Transverse colon (tissue), 4 donors: ENCODE measurements at regions of chr22 and their contacts with region 1.

Region 1: DNA sequence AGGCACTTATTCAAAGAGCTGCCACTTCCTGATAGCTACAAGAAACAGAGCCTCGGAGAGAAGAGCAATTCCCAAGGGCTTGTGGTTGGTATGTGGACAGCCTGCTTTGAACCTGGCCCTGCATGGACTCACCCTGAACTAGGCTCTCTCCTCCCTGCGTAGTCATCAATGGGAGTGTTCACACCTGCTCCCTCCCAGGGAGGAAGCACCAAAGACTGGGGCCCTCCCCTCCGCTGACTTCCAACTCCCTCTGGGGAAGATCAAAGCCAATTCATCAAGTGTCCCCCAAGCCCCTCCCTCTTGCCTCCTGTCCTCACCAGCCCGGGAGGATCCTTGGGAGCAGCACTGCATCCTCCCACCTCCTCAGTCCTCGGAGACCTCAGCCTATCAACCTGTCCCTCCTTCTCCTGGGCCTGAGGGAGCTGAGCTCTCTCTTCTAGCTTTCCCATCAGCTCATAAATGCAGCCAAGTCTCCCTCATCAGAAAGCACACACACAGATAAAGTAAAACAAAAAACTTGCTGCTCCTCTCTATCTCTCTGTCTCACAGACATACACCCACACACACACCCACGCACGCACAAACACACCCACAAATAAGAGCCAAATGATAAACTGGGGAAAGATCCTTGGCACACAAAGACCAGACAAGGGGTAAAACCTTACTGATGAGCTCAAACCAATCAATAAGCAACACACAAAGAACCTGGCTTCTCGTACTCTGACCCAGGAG is 3.3 kb downstream of the A4GALT start:
- DNase-seq: no peak
- H3K4me3 ChIP-seq: no peak overlapping the region
- H3K27ac ChIP-seq: peak overlapping the region; percentile 23 to 89 (median 48)
- H3K4me1 ChIP-seq: peaks cover 0 to 28% (median 19%) of the 10 kb centered on the region in 4 donors
- H3K27me3 ChIP-seq: peaks cover 46% of the 10 kb centered on the region
- CTCF ChIP-seq: no peak
- EP300 ChIP-seq: no peak
- POLR2A ChIP-seq: no peak

Region 2: DNA sequence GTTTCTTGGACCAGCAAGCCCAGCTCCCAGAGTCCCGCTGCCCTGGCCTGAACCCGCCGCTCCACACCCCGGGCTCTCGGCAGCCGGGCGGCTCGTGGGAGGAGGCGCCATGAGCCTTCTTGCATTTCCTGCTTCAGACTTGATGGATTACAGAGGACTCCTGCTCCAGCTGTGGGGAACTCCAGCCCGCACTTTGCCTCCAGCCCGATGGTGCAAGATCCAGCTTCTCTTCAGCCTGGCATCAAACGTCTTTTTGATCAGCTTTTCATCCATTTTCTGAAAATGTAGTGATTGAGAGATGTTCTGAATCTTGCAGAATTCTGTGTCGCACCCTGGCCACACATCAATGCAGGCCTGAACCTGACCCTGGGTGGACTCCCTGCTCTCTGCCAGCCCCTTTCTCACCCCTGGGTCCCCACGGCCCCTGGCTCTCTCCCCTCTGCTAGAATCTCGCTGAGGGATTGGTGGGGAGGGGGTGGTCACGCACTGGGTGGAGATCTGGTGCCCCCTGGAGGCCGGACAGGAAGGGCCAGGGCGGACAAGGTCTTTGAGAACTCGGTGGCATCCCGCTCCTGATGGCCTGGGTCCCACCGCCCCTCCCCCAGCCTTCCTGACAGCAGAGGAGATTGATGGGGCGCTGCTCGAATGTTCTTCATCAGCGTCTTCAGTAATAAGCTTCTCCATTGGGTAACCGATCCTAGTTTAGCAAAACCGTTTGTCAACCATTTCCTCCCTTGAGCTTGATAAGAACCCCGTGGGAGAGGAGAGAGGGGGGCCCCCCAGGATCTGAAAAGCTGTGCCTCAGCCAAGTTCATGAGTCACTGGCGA is 273.1 kb before region 1 on chr22:
- in situ Hi-C with region 1: no loop called
- intact Hi-C with region 1: no loop called
- DNase-seq: peak; percentile 93
- H3K4me3 ChIP-seq: peak overlapping the region in 3 of 4 donors; percentile 26 to 46 (median 29)
- H3K27ac ChIP-seq: peak overlapping the region; percentile 67 to 81 (median 73)
- H3K4me1 ChIP-seq: peaks cover 5 to 23% (median 16%) of the 10 kb centered on the region in 4 donors
- H3K27me3 ChIP-seq: no peaks in the 10 kb centered on the region
- CTCF ChIP-seq: peak; percentile 51 to 57 (median 56)
- EP300 ChIP-seq: no peak
- POLR2A ChIP-seq: no peak

Region 3: GRCh38 chr22:42649246-42650099 is 67.9 kb before region 1 on chr22 and contains the start of gene CYB5R3:
- in situ Hi-C with region 1: loop called in 1 of 4 experiments (anchors 10 kb)
- intact Hi-C with region 1: no loop called
- DNase-seq: peak; percentile 88
- H3K4me3 ChIP-seq: peak within 1 kb of the TSS; percentile 58 to 89 (median 76)
- H3K27ac ChIP-seq: peak within 1 kb of the TSS; percentile 90 to 98 (median 95)
- H3K4me1 ChIP-seq: peaks cover 38 to 46% (median 44%) of the 10 kb centered on the region in 4 donors
- H3K27me3 ChIP-seq: no peaks in the 10 kb centered on the region
- CTCF ChIP-seq: no peak
- EP300 ChIP-seq: no peak
- POLR2A ChIP-seq: no peak
- total RNA-seq, gene CYB5R3: 138 to 294 (median 167) TPM

Region 4: GRCh38 chr22:42662114-42663021 is 55.0 kb before region 1 on chr22:
- in situ Hi-C with region 1: loop called in 1 of 4 experiments (anchors 10 kb)
- intact Hi-C with region 1: loop called (anchors 10 kb)
- DNase-seq: peak; percentile 87
- H3K4me3 ChIP-seq: peak overlapping the region; percentile 22 to 58 (median 38)
- H3K27ac ChIP-seq: peak overlapping the region; percentile 5 to 45 (median 28)
- H3K4me1 ChIP-seq: peaks cover 0 to 12% (median 11%) of the 10 kb centered on the region in 4 donors
- H3K27me3 ChIP-seq: peaks cover 8% of the 10 kb centered on the region
- CTCF ChIP-seq: peak; percentile 74 to 89 (median 83)
- EP300 ChIP-seq: no peak
- POLR2A ChIP-seq: no peak

Region 5: GRCh38 chr22:42959576-42960509 is 242.5 kb after region 1 on chr22:
- in situ Hi-C with region 1: no loop called
- intact Hi-C with region 1: no loop called
- DNase-seq: peak; percentile 62
- H3K4me3 ChIP-seq: peak overlapping the region in 1 of 4 donors; percentile 8
- H3K27ac ChIP-seq: peak overlapping the region; percentile 51 to 76 (median 70)
- H3K4me1 ChIP-seq: peaks cover 33 to 73% (median 42%) of the 10 kb centered on the region in 4 donors
- H3K27me3 ChIP-seq: no peaks in the 10 kb centered on the region
- CTCF ChIP-seq: no peak
- EP300 ChIP-seq: no peak
- POLR2A ChIP-seq: peak; percentile 25